HCT116 (cell line): ENCODE measurements at regions of chr6 and their contacts with region 1.

Region 1: GRCh38 chr6:137707590-137708360 is 159.3 kb upstream of the TNFAIP3 start:
- DNase-seq: peak; percentile 69
- ATAC-seq: peak; percentile 82
- H3K4me3 ChIP-seq: peak overlapping the region in 1 of 2 experiments; percentile 24; a peak in 3 of 4 replicates
- H3K27ac ChIP-seq: no peak overlapping the region
- H3K4me1 ChIP-seq: peaks cover 0 to 13% of the 10 kb centered on the region in 2 experiments; a peak in 2 of 4 replicates
- H3K27me3 ChIP-seq: no peaks in the 10 kb centered on the region
- CTCF ChIP-seq: peak; percentile 66 to 89 (median 78)
- POLR2A ChIP-seq: no peak
- RAD21 ChIP-seq: peak; percentile 92

Region 2: DNA sequence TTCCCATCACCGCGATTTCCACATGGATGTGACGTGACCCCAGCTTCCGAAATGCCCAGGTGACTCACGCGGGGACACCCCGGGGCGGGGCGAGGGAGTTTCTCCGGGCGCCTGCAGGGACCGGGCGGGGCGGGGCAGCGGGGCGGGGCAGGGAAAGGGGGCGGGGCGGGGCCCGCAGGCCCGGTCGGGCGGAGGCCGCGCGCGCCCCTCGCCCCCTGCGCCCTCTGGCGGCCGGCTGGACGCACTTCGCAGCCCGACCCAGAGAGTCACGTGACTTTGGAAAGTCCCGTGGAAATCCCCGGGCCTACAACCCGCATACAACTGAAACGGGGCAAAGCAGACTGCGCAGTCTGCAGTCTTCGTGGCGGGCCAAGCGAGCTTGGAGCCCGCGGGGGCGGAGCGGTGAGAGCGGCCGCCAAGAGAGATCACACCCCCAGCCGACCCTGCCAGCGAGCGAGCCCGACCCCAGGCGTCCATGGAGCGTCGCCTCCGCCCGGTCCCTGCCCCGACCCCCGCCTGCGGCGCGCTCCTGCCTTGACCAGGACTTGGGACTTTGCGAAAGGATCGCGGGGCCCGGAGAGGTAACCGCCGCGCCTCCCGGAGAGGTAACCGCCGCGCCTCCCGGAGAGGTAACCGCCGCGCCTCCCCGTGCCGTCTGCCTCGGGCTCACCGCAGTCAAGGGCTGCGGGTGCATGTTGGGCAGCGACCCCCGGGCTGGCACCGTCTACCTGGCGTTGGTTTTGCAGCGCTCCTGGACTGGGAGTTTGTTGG is 159.3 kb after region 1 on chr6 and contains the start of gene TNFAIP3:
- CTCF ChIA-PET with region 1: interaction called, 5 read pairs
- POLR2A ChIA-PET with region 1: no interaction called
- RAD21 ChIA-PET with region 1: no interaction called
- intact Hi-C with region 1: loop called (anchors 1 kb)
- DNase-seq: peak; percentile 74
- ATAC-seq: peak; percentile 89
- H3K4me3 ChIP-seq: peak within 1 kb of the TSS; percentile 63 to 69
- H3K27ac ChIP-seq: peak within 1 kb of the TSS; percentile 57; the same call in 1 of the 2 replicates
- H3K4me1 ChIP-seq: peaks cover 10 to 26% of the 10 kb centered on the region in 2 experiments; a peak in 3 of 4 replicates
- H3K27me3 ChIP-seq: no peaks in the 10 kb centered on the region
- CTCF ChIP-seq: peak; percentile 52 to 69 (median 58); a peak in 5 of 6 replicates
- POLR2A ChIP-seq: no peak
- RAD21 ChIP-seq: peak; percentile 71
- total RNA-seq, gene TNFAIP3: 4.4 TPM

Region 3: DNA sequence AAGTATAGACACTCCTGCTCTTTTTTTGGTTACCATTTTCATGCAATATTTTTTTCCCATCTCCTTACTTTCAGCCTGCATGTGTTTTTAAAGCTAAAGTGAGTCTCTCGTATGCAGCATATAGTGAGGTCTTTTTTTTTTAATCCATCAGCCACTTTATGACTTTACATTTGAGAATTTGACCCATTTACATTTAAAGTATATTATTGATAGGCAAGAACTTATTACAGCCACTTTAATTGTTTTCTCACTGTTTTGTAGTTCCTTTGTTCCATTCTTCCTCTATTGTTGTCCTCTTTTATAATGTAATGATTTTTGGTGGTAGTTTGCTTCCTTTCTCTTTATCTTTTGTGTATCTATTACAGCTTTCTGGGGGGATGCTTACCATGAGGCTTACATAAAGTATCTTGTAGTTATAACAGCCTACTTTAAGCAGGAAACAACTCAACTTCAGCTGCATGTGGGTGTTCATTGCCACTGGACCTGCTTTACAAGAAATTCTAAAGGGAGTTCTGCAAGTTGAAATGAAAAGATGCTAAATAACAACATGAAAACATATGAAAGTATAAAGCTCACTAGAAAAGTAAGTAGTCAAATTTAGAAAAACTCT is 231.1 kb after region 1 on chr6:
- CTCF ChIA-PET with region 1: interaction called, 16 read pairs
- POLR2A ChIA-PET with region 1: interaction called, 3 read pairs
- RAD21 ChIA-PET with region 1: no interaction called
- intact Hi-C with region 1: no loop called
- DNase-seq: no peak
- ATAC-seq: no peak
- H3K4me3 ChIP-seq: no peak overlapping the region
- H3K27ac ChIP-seq: no peak overlapping the region
- H3K4me1 ChIP-seq: peaks cover 0 to 1% of the 10 kb centered on the region in 2 experiments; a peak in 1 of 4 replicates
- H3K27me3 ChIP-seq: no peaks in the 10 kb centered on the region
- CTCF ChIP-seq: no peak
- POLR2A ChIP-seq: no peak
- RAD21 ChIP-seq: no peak

Region 4: GRCh38 chr6:137944793-137945498 is 237.2 kb after region 1 on chr6:
- CTCF ChIA-PET with region 1: interaction called, 16 read pairs
- POLR2A ChIA-PET with region 1: interaction called, 3 read pairs
- RAD21 ChIA-PET with region 1: no interaction called
- intact Hi-C with region 1: loop called (anchors 1 kb)
- DNase-seq: peak; percentile 19
- ATAC-seq: peak; percentile 95
- H3K4me3 ChIP-seq: no peak overlapping the region
- H3K27ac ChIP-seq: no peak overlapping the region
- H3K4me1 ChIP-seq: no peaks in the 10 kb centered on the region
- H3K27me3 ChIP-seq: no peaks in the 10 kb centered on the region
- CTCF ChIP-seq: peak; percentile 75 to 79 (median 78)
- POLR2A ChIP-seq: no peak
- RAD21 ChIP-seq: peak; percentile 77

Region 5: DNA sequence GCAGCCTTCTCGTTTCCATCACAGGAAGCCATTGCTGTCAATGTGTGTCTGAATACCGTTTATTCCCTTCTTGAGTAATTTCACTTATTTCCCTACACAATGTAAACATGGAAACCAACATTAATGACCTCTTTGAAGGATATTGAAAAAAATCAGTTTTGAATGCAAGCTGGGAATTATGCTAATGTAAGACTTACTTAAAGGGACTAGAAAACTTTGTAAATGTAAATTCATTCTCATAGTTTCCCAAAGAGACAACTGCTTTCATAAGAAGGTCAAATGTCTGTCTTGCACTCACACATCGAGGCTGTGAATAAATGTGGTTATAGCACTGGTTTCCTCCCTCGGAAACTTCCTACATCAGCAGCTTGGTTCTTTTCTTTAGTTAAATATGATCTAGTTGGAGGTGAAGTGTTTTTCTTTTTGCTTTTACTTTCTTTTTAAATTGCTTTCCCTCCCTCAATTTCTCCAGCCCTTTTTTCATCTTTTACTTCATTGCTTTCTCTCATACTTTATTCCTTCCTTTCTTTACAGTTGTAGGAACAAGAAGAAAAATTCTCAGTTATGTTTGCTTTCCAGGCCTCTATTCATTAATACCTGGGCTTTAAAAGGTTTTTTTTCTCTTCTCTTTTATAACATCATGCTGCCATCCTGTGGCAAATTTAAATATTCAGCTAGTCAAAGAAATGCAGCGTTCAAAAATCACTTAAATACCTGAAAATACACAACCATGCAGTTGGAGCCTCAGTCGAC is 267.6 kb after region 1 on chr6:
- CTCF ChIA-PET with region 1: interaction called, 14 read pairs
- POLR2A ChIA-PET with region 1: no interaction called
- RAD21 ChIA-PET with region 1: no interaction called
- intact Hi-C with region 1: loop called (anchors 1 kb)
- DNase-seq: peak; percentile 7
- ATAC-seq: no peak
- H3K4me3 ChIP-seq: no peak overlapping the region
- H3K27ac ChIP-seq: no peak overlapping the region
- H3K4me1 ChIP-seq: peaks cover 7 to 21% of the 10 kb centered on the region in 2 experiments
- H3K27me3 ChIP-seq: no peaks in the 10 kb centered on the region
- CTCF ChIP-seq: peak in 2 of 3 experiments; percentile 45 to 62; a peak in 3 of 6 replicates
- POLR2A ChIP-seq: no peak
- RAD21 ChIP-seq: peak; percentile 71

Region 6: DNA sequence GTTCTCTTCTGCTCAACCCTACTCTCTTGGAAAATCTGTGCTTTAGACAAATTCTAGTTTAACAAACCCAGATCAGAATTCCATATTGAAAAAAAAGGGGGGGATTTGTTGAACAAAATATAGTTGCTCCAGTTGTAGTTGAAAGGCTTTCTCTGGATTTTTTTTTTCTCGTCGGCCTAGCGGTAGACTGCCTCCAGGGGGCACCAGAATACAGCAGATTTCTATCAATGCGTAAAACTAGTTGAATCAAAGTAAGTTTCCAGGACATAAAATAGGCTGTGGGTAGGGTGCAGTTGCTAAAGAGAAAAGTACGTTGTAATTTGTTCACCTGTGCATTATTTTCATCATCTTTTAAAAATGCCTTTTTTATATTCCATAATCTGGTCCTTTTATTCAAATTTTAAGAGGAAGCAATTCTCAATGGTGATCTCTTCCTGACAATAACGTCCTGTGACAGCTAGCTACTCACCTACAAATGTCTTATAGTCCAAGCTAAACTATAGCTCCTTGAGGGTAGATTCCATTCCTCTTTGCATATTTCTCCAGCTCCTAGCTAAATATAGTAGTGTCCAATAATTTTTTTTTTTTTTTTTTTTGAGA is 294.1 kb after region 1 on chr6:
- CTCF ChIA-PET with region 1: interaction called, 17 read pairs
- POLR2A ChIA-PET with region 1: interaction called, 3 read pairs
- RAD21 ChIA-PET with region 1: no interaction called
- intact Hi-C with region 1: loop called (anchors 1 kb)
- DNase-seq: peak; percentile 48
- ATAC-seq: peak; percentile 52; the same call in 1 of the 2 replicates
- H3K4me3 ChIP-seq: no peak overlapping the region
- H3K27ac ChIP-seq: no peak overlapping the region
- H3K4me1 ChIP-seq: peaks cover 0 to 10% of the 10 kb centered on the region in 2 experiments; a peak in 3 of 4 replicates
- H3K27me3 ChIP-seq: no peaks in the 10 kb centered on the region
- CTCF ChIP-seq: peak; percentile 86 to 95 (median 92)
- POLR2A ChIP-seq: no peak
- RAD21 ChIP-seq: peak; percentile 95

Region 7: GRCh38 chr6:138109042-138109997 is 401.5 kb after region 1 on chr6:
- CTCF ChIA-PET with region 1: no interaction called
- POLR2A ChIA-PET with region 1: no interaction called
- RAD21 ChIA-PET with region 1: no interaction called
- intact Hi-C with region 1: loop called (anchors 2 kb)
- DNase-seq: peak; percentile 78
- ATAC-seq: peak; percentile 11; the same call in 1 of the 2 replicates
- H3K4me3 ChIP-seq: no peak overlapping the region
- H3K27ac ChIP-seq: no peak overlapping the region
- H3K4me1 ChIP-seq: peaks cover 13 to 33% of the 10 kb centered on the region in 2 experiments
- H3K27me3 ChIP-seq: no peaks in the 10 kb centered on the region
- CTCF ChIP-seq: peak; percentile 92 to 99 (median 93)
- POLR2A ChIP-seq: no peak
- RAD21 ChIP-seq: peak; percentile 98